Activated CD4-positive, alpha-beta memory T cell treated with anti-CD3 and anti-CD28 coated beads for 36 hours (primary cell): ENCODE measurements at regions of chr17 and their contacts with region 1.

Region 1: GRCh38 chr17:66310528-66311148 is 8.2 kb downstream of the PRKCA start:
- DNase-seq: peak; percentile 72
- H3K4me3 Mint-ChIP-seq: peak overlapping the region; percentile 13
- H3K27ac Mint-ChIP-seq: peak overlapping the region; percentile 88
- H3K4me1 Mint-ChIP-seq: peaks cover 93% of the 10 kb centered on the region
- H3K27me3 Mint-ChIP-seq: no peaks in the 10 kb centered on the region

Region 2: DNA sequence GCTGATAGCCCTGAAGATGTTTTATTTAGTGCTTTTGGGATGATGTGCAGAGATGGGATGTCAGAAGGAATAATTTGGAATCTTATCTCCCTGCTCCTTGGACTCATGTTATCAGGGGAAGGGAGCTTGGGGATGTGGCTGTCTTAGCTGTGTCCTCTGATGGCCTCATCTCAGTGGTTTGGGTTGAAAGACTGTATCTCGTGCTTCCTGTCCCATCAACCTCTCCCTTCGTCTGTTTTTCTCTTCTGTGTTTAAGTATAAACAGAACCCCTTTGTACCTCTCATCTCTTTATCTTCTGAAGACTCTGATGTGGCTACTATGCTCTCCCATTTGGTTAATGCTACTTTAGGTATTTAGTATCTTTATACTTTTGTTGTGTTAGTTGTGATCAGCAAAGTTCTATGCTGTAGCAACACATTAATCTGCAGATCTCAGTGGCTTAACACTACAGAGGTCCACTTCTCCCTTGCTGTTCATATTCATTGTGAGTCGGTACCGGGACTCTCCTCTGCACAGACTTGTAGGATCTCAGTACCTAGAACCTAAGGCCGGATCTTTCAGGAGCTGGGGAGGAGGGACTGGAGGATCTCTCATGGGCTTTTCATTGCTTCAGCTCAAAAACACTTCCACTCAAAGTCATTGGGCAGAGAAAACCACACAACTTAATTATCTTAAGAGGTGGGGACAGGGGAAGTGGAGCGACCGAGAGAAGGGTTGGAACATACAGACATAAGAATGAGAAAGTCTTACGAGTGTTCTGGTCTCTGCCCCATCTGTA is 20.6 kb after region 1 on chr17:
- CTCF ChIA-PET with region 1: interaction called, 4 read pairs
- POLR2A ChIA-PET with region 1: interaction called, 4 read pairs
- intact Hi-C with region 1: loop called (anchors 1 kb)
- DNase-seq: peak; percentile 36
- H3K4me3 Mint-ChIP-seq: peak overlapping the region; percentile 70
- H3K27ac Mint-ChIP-seq: peak overlapping the region; percentile 92
- H3K4me1 Mint-ChIP-seq: peaks cover 79% of the 10 kb centered on the region
- H3K27me3 Mint-ChIP-seq: no peaks in the 10 kb centered on the region

Region 3: DNA sequence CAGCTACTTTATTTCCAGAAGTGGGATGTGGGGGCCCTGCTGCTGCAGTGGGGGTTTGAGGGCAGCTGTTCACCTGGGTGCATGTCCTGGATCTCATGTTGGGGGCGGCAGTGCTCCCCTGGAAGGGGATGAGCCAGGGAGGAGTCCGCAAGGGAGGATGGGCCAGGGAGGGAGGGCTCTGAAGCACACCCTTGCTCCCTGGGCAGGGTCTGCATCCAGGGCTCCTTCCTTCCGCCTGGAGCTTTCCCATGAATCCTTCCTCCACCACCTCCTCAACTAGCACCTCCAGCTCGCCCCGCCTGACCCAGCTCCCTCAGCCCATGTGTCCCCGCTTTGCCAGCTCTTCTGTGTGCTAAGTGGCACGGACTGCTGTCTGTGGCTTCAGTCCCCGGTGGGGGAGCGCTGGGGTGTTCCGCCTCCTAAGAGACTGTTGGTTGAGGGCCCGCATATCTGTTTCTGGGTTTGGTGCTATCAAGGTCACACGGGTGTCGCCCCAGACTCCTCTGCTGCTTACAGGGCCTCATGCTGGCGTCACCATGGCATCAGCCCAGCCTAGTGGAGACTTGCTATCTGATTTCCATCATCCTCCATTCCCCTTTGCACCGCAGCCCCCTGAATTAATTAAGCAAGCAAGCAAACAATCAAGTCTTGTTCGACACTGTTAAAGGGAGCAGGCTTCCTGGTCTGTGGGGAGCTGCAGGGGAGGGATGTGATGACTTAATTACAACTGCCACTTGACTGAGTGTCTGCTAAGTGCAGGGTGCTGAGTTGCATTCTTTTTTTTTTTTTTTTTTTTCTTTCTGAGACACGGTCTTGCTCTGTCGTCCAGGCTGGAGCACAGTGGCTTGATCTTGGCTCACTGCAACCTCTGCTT is 63.5 kb after region 1 on chr17:
- CTCF ChIA-PET with region 1: interaction called, 4 read pairs
- POLR2A ChIA-PET with region 1: no interaction called
- intact Hi-C with region 1: loop called (anchors 2 kb)
- DNase-seq: peak; percentile 58
- H3K4me3 Mint-ChIP-seq: no peak overlapping the region
- H3K27ac Mint-ChIP-seq: peak overlapping the region; percentile 69
- H3K4me1 Mint-ChIP-seq: peaks cover 70% of the 10 kb centered on the region
- H3K27me3 Mint-ChIP-seq: no peaks in the 10 kb centered on the region

Region 4: DNA sequence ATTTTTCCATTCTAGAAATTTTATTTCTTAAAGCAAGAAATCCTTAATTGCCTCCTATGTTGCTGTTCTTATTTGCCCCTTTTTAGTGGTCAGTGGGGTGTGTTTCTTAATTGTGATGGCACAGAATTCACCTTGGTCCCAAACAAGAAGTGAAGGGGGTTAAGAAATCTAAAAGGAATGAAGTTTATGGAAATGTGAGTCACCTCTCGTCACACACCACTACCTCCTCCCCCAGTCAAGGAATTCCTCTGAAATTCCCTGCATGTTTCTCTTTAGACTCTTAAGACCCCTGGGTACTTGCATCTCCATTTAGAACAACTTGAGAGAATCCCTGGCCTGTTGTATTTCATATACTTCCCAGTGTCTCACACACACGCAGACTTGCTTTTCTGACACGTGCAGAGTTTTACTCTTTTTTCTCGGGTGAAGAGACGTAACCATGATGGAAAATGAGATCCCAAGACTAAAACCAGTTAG is 239.1 kb after region 1 on chr17:
- CTCF ChIA-PET with region 1: no interaction called
- POLR2A ChIA-PET with region 1: interaction called, 4 read pairs
- intact Hi-C with region 1: loop called (anchors 5 kb)
- DNase-seq: no peak
- H3K4me3 Mint-ChIP-seq: no peak overlapping the region
- H3K27ac Mint-ChIP-seq: no peak overlapping the region
- H3K4me1 Mint-ChIP-seq: peaks cover 56% of the 10 kb centered on the region
- H3K27me3 Mint-ChIP-seq: no peaks in the 10 kb centered on the region